Panc1 (cell line): ENCODE measurements at regions of chr2 and their contacts with region 1.

Region 1: GRCh38 chr2:234483568-234484251 is 13.2 kb downstream of the ARL4C start:
- DNase-seq: no peak
- ATAC-seq: no peak
- H3K4me3 ChIP-seq: no peak overlapping the region
- H3K27ac ChIP-seq: peak overlapping the region; percentile 66; the same call in 1 of the 2 replicates
- H3K4me1 ChIP-seq: peaks cover 12% of the 10 kb centered on the region
- H3K27me3 ChIP-seq: no peaks in the 10 kb centered on the region
- CTCF ChIP-seq: peak; percentile 38; the same call in 1 of the 2 replicates

Region 2: GRCh38 chr2:234425619-234426603 is 57.8 kb before region 1 on chr2:
- CTCF ChIA-PET with region 1: no interaction called
- POLR2A ChIA-PET with region 1: no interaction called
- in situ Hi-C with region 1: no loop called
- intact Hi-C with region 1: loop called (anchors 10 kb)
- DNase-seq: no peak
- ATAC-seq: no peak
- H3K4me3 ChIP-seq: no peak overlapping the region
- H3K27ac ChIP-seq: peak overlapping the region; percentile 69
- H3K4me1 ChIP-seq: peaks cover 17% of the 10 kb centered on the region
- H3K27me3 ChIP-seq: no peaks in the 10 kb centered on the region
- CTCF ChIP-seq: no peak

Region 3: DNA sequence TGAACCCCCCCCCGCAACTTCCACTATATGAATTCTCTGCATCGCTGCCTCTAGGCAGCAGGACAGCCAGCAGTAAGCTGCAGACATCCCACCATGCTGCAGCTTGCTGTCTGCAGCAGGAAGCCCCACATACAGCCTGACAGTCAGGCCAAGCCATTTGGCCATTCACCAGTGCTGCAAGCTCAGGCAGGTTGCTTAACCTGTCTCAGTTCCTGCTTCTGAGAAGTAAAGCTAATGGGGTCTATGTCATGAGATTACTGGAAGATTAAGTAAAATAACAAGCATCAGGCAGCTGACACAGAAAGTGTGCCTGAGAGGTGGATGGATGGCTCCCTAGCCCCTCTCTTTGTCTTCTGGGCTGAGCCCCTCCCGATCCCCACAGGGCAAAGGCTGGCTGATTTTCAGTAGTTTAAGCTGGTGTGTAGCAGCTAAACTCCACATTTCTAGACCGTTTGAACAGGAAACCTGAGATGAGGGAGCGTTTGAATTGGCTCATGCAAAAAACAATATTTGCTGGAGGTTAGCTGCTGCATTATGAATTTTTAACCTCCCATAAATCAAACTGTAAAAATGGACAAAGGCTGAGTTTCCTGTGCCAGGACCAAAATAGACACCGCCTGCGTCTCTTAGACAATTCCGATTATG is 207.0 kb after region 1 on chr2:
- CTCF ChIA-PET with region 1: no interaction called
- POLR2A ChIA-PET with region 1: no interaction called
- in situ Hi-C with region 1: no loop called
- intact Hi-C with region 1: no loop called
- DNase-seq: no peak
- ATAC-seq: peak; percentile 58; the same call in 1 of the 2 replicates
- H3K4me3 ChIP-seq: no peak overlapping the region
- H3K27ac ChIP-seq: peak overlapping the region; percentile 45; the same call in 1 of the 2 replicates
- H3K4me1 ChIP-seq: peaks cover 18% of the 10 kb centered on the region; the same call in 1 of the 2 replicates
- H3K27me3 ChIP-seq: no peaks in the 10 kb centered on the region
- CTCF ChIP-seq: no peak